ENCODE measurements at regions of chr3 and their contacts with region 1.

Region 1: GRCh38 chr3:45760878-45761711 is 35.2 kb downstream of the SLC6A20 start:
- DNase-seq: peak; percentile 63
- ATAC-seq: peak; percentile 85
- H3K4me3 Mint-ChIP-seq: no peak overlapping the region
- H3K27ac Mint-ChIP-seq: no peak overlapping the region
- H3K4me1 Mint-ChIP-seq: peaks cover 2% of the 10 kb centered on the region
- H3K27me3 Mint-ChIP-seq: peaks cover 2% of the 10 kb centered on the region

Region 2: DNA sequence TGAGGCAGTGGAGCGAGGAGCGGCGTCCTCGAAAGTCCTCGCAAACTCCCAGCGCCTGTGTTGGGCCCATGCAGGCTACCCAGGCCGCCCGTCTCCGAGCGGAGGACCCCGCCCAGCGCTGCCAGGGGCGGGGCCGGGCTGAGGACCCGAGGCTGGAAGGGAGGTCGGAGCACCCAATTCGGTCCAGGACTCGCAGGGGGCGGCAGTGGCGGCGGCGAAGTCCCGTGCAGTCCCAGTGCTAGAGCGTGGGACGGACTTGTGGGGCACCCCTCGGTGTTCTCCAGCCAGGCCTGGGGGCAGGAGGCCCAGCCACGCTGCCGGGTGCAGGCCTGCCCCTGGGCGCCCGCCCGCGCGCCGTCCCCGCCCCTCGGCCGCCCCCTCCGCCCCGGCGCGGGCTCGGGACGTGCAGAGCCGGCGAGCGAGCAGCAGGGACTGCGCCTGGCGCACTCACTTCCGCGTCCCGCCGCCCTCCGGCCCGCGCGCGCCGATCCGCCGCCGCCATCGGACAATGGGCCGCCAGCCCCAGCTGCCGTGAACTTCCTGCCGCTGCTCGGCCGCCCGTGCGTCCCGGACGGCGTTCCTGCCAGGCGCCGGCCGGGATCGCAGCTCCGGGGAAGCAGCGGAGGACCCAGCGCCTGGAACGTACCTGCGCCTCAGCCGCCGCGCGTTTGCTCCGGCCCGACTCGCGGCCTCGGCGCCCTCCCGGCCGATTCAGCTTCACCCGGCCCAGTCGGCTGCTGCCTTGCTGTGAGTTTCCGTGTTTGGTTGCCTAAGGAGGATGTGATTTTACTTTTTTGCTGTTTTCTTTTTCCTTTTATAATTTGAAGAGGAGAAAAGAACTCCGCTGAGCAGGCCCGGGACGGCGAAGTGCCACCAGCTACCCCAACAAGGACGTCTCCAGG is 167.1 kb before region 1 on chr3:
- CTCF ChIA-PET with region 1: no interaction called
- DNase-seq: peak; percentile 83
- ATAC-seq: peak; percentile 90
- H3K4me3 Mint-ChIP-seq: peak overlapping the region; percentile 93
- H3K27ac Mint-ChIP-seq: peak overlapping the region; percentile 90
- H3K4me1 Mint-ChIP-seq: peaks cover 50% of the 10 kb centered on the region
- H3K27me3 Mint-ChIP-seq: peaks cover under 1% of the 10 kb centered on the region

Region 3: GRCh38 chr3:45921062-45921848 is 160.2 kb after region 1 on chr3:
- CTCF ChIA-PET with region 1: interaction called, 10 read pairs
- DNase-seq: no peak
- ATAC-seq: no peak
- H3K4me3 Mint-ChIP-seq: no peak overlapping the region
- H3K27ac Mint-ChIP-seq: no peak overlapping the region
- H3K4me1 Mint-ChIP-seq: peaks cover 37% of the 10 kb centered on the region
- H3K27me3 Mint-ChIP-seq: no peaks in the 10 kb centered on the region

Region 4: DNA sequence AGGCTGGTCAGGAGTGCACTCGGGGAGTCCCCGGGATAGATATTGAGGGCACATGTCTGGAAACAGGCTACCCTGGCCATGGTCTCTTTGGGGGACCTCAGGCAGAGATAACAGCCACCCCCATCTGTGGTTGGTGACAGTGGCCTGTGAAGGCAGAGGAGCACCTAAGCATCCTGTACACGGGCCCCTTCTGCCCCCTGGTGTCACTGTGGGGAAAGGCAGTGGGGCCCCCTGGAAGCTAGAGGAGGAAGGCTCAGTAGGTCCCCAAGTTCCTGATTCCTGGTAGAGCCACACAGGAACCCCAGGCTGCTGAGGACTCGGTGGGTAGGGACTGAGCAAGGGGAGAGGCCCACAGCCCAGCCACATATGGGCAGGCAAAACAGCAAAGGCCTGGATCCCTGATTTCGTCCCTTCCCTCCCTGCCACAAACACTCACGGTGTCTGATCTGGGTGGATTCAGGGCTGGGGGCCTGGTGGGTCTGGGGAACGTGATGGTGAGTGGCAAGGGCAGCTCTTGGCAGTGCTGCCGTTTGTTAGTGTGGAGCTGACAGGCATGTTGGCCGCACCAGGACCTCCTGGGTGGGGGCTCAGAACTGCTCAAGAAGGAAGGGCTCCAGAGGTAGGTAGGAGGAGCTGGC is 168.1 kb after region 1 on chr3:
- CTCF ChIA-PET with region 1: interaction called, 64 read pairs
- DNase-seq: peak; percentile 79
- ATAC-seq: peak; percentile 99
- H3K4me3 Mint-ChIP-seq: no peak overlapping the region
- H3K27ac Mint-ChIP-seq: no peak overlapping the region
- H3K4me1 Mint-ChIP-seq: peaks cover 3% of the 10 kb centered on the region
- H3K27me3 Mint-ChIP-seq: no peaks in the 10 kb centered on the region